Right ventricle myocardium superior (tissue), 1 donor: ENCODE measurements at regions of chr4 and their contacts with region 1.

Region 1: DNA sequence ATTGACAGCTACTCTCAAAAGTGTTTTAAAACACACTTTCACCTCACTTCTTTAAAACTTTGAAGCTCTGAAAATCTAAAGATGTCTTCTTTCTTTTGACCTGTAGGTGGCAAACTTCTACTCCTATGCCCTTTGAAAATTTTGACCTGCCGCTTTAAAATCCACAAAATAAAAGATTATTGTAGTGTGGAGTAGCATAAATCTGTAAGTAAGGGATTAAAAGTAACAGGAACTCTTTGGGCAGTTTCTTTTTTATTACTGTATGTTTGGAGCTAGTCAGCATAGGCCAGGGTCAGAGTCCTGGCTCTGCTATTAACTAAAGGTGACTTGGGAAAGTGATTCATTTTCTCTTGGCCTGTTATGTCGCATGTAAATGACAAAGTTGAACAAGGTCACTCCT is 25.5 kb downstream of the BBS12 start:
- DNase-seq: no peak
- ATAC-seq: peak; percentile 59

Region 2: GRCh38 chr4:122914938-122915337 is 156.9 kb after region 1 on chr4:
- intact Hi-C with region 1: loop called (anchors 5 kb)
- DNase-seq: no peak
- ATAC-seq: no peak

Region 3: GRCh38 chr4:123528501-123529277 is 770.7 kb after region 1 on chr4:
- intact Hi-C with region 1: no loop called
- DNase-seq: no peak
- ATAC-seq: no peak